ENCODE measurements at regions of chr2 and their contacts with region 1.

Region 1: DNA sequence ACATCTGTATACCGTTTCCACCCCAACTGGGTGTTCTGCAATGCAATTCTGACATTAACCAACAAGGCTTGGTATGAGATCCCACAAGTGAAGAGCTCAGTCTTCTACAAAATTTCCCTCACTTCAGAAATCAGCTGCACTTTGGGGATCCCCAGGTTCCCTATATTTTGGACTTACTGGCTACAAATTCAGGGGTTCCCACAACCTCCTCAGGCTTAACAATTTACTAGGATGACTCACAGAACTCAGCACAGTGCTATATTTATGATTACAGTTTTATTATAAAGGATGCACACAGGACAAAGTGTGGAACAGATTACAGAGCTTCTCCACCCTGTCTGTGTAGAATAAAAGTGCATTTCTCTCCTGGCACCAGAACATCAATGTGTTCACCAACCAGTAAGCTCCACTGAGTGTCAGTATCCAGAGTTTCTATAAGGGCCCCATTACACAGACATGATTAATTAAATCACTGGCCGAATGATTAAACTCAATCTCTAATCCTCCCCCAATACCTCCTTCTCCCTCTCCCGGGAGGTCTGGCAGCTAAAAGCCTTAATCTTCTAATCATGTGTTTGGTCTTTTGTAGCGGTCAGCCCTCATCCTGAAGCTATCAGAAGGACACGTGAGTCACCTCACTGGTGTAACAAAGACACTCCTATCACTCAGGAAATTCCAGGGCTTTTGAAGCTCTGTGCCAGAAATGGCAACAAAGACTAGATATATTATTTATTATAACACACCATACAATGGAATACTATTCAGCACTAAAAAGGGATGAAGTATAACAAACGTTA is 84.6 kb downstream of the SLC66A3 start:
- DNase-seq: no peak
- ATAC-seq: peak in 4 of 8 donors; percentile 43 to 67 (median 56)
- H3K4me3 ChIP-seq: no peak overlapping the region
- H3K27ac ChIP-seq: peak overlapping the region in 1 of 10 donors; percentile 0
- H3K4me1 ChIP-seq: peaks cover 0 to 23% (median 13%) of the 10 kb centered on the region in 9 donors
- H3K27me3 ChIP-seq: no peaks in the 10 kb centered on the region
- CTCF ChIP-seq: no peak

Region 2: DNA sequence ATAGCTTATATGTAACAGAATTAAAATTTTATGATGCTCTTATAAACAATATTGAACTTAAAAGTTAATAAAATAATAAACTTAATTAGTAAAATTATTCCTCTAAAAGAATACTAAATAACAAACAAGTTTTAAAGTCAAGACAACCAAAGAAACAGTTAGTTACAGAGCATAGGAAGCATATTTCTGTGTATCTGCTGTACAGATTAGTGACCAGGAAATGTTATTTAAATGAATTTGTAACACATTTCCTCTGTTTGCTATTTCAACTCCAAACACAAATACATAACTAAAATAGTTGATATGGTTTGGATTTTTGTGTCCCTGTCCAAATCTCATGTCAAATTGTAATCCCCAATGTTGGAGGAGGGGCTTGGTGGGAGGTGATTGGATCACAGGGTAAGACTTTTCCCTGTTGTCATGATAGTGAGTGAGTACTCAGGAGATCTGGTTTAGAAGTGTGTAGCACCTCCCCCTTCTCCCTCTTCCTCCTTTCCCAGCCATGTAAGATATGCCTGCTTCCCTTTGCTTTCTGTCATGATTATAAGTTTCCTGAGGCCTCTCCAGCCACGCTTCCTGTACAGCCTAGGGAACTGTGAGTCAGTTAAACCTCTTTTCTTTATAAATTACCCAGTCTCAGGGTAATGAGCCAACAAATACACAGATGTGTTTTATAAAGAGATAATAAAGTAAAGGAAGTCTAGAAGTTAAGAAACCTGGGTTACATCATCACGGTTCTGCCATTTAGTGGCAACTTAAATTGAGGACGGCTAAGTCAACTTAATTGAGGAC is 52.8 kb after region 1 on chr2:
- intact Hi-C with region 1: loop called in 1 of 10 experiments (anchors 5 kb)
- DNase-seq: peak in 1 of 2 donors; percentile 15
- ATAC-seq: peak; percentile 34 to 90 (median 78)
- H3K4me3 ChIP-seq: no peak overlapping the region
- H3K27ac ChIP-seq: peak overlapping the region in 8 of 10 donors; percentile 9 to 66 (median 40)
- H3K4me1 ChIP-seq: peaks cover 0 to 70% (median 39%) of the 10 kb centered on the region in 9 donors
- H3K27me3 ChIP-seq: no peaks in the 10 kb centered on the region
- CTCF ChIP-seq: no peak

Region 3: GRCh38 chr2:11377928-11378545 is 138.2 kb after region 1 on chr2:
- intact Hi-C with region 1: no loop called
- DNase-seq: peak in 1 of 2 donors; percentile 33
- ATAC-seq: peak in 4 of 8 donors; percentile 11 to 57 (median 28)
- H3K4me3 ChIP-seq: peak overlapping the region in 6 of 10 donors; percentile 5 to 40 (median 30)
- H3K27ac ChIP-seq: peak overlapping the region; percentile 21 to 78 (median 70)
- H3K4me1 ChIP-seq: peaks cover 6 to 48% (median 27%) of the 10 kb centered on the region in 9 donors
- H3K27me3 ChIP-seq: no peaks in the 10 kb centered on the region
- CTCF ChIP-seq: no peak

Region 4: GRCh38 chr2:11411768-11412448 is 172.0 kb after region 1 on chr2:
- intact Hi-C with region 1: loop called in 7 of 10 experiments (anchors 2 to 5 kb)
- DNase-seq: peak in 1 of 2 donors; percentile 80
- ATAC-seq: peak; percentile 38 to 85 (median 73)
- H3K4me3 ChIP-seq: peak overlapping the region in 9 of 10 donors; percentile 26 to 56 (median 46)
- H3K27ac ChIP-seq: peak overlapping the region in 4 of 10 donors; percentile 2 to 53 (median 26)
- H3K4me1 ChIP-seq: peaks cover 0 to 19% (median 10%) of the 10 kb centered on the region in 9 donors
- H3K27me3 ChIP-seq: no peaks in the 10 kb centered on the region
- CTCF ChIP-seq: peak; percentile 73 to 95 (median 86)

Measured in heart right ventricle (tissue), 16 donors.